ENCODE measurements at regions of chr5 and their contacts with region 1.

Region 1: GRCh38 chr5:137501846-137502406 is 2.8 kb upstream of the SPOCK1 start:
- DNase-seq: no peak
- ATAC-seq: no peak
- H3K4me3 ChIP-seq: no peak overlapping the region
- H3K27ac ChIP-seq: no peak overlapping the region
- H3K4me1 ChIP-seq: peaks cover 3 to 9% of the 10 kb centered on the region in 2 donors
- H3K27me3 ChIP-seq: peaks cover 21 to 39% of the 10 kb centered on the region in 2 donors
- CTCF ChIP-seq: no peak

Region 2: GRCh38 chr5:137320056-137321045 is 181.6 kb before region 1 on chr5:
- intact Hi-C with region 1: loop called in 1 of 2 experiments (anchors 10 kb)
- DNase-seq: peak in 2 of 4 donors; percentile 26 to 44
- ATAC-seq: peak; percentile 80
- H3K4me3 ChIP-seq: no peak overlapping the region
- H3K27ac ChIP-seq: no peak overlapping the region
- H3K4me1 ChIP-seq: no peaks in the 10 kb centered on the region
- H3K27me3 ChIP-seq: peaks cover 0 to 44% of the 10 kb centered on the region in 2 donors
- CTCF ChIP-seq: peak; percentile 66 to 67